Gastrocnemius medialis (tissue), 4 donors: ENCODE measurements at regions of chr10 and their contacts with region 1.

Region 1: DNA sequence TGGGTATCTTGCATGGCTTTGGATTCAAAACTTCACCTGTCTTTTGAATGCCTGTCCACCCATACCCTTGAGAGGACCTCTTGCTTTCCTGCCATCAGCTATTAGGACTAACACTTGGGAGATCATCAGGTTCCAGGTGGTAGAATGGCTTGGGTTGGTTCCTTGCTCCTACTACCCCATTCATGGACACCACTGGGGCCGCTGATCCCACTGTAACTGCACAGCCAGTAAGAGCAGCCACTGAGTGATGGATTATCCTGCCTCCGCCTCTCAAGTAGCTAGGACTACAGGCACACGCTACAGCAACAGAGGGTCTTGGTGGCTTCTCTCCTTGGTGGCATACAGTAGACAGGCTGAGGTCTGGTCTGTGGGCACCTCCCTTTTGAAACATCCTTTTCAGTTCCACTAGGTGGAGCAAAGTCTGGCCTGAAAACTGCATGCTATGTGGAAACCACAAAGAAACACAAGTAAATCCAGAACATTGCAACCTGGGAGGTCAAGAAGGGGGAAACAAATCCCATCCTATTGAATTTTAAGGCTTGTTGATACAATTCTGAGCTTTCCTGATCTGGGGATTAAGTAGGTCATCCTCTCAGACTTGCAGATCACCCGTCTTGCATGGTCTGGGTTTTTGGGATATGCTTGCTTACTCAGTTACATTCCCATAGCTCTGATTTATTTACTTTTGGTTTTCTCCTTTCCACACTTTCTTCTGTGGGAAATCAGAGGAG is 9.4 kb downstream of the WBP1L start:
- DNase-seq: peak; percentile 35 to 62
- ATAC-seq: peak; percentile 73 to 91
- H3K4me3 ChIP-seq: no peak overlapping the region
- H3K27ac ChIP-seq: peak overlapping the region; percentile 74 to 81 (median 78)
- H3K4me1 ChIP-seq: peaks cover 29 to 30% of the 10 kb centered on the region in 2 donors
- H3K27me3 ChIP-seq: no peaks in the 10 kb centered on the region
- CTCF ChIP-seq: peak; percentile 44 to 66 (median 51)
- POLR2A ChIP-seq: no peak

Region 2: GRCh38 chr10:102769375-102770107 is 16.4 kb after region 1 on chr10:
- in situ Hi-C with region 1: no loop called
- intact Hi-C with region 1: loop called (anchors 2 kb)
- DNase-seq: no peak
- ATAC-seq: no peak
- H3K4me3 ChIP-seq: no peak overlapping the region
- H3K27ac ChIP-seq: peak overlapping the region; percentile 91 to 100 (median 96)
- H3K4me1 ChIP-seq: peaks cover 54 to 76% of the 10 kb centered on the region in 2 donors
- H3K27me3 ChIP-seq: no peaks in the 10 kb centered on the region
- CTCF ChIP-seq: no peak
- POLR2A ChIP-seq: no peak